ENCODE measurements at regions of chr5 and their contacts with region 1.

Region 1: DNA sequence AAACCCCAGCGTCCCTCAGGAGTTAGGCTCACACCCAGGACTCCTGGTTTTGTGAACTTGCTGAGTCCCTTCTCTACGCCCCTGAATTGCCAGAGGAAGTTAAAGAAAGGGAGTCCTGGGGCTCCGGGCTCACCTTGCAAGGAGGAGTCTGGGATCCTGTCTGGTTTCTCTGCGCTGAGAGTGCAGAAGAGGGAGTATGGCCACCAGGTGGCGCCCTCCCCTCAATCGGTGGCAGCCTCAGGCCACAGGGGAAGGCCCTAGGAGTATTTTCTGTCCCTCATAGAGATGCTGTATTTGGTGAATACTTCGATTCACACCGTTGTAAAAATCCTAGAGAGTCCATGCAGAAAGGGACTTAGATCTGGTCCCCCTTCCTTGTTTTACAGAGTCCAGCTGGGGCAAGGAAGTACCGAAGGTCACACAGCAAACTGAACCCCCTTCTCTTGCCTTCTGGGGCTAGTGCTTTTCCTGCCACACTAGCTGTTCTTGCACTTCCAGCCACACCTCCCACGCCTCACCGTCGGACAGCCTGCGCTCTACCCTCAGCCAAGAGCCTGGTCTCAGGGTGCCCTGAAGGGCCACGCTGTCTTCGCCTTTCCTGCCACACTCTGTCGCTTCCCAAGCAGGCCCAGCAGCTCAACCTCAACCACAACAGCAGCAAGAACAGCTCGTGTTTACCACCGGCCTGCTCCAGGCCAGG is 10.2 kb downstream of the HAND1 start:
- DNase-seq: peak; percentile 89
- H3K4me3 ChIP-seq: no peak overlapping the region
- H3K27ac ChIP-seq: peak overlapping the region in 3 of 4 donors; percentile 61 to 65 (median 62)
- H3K4me1 ChIP-seq: peaks cover 0 to 43% (median 27%) of the 10 kb centered on the region in 4 donors
- H3K27me3 ChIP-seq: no peaks in the 10 kb centered on the region
- CTCF ChIP-seq: peak; percentile 75 to 95 (median 79)
- EP300 ChIP-seq: no peak
- POLR2A ChIP-seq: no peak

Region 2: DNA sequence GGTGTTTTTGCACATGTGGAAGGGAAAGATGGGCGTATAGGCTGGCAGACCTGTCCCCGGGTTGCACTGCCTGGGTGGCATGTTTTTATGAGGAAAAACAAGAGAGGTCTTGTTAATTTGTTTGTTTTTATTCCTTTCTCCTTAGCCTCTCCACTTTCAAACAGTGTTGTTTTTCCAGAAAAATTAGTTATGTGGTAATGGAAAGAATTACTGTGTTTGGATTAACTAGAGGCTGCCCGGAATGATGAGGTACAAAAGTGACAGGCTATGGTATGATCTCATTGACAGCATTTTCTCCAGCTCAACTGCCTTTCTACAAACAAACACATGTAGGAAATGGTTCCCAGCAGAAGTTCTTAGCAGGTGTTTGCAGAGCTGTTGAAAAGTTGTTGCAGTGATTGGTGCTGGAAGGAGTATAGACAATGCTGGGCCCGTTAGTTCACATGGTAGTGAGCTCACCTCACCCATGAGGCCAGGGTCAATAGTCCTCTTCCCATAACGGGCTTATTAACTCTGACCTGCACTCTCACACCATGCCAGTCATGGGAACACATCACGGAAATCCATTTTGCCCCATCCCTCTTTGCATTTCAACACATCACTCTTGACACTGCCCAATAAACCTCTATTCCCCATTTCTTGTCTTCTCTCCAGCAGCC is 133.3 kb before region 1 on chr5:
- intact Hi-C with region 1: no loop called
- DNase-seq: no peak
- H3K4me3 ChIP-seq: no peak overlapping the region
- H3K27ac ChIP-seq: no peak overlapping the region
- H3K4me1 ChIP-seq: peaks cover 0 to 4% (median 0%) of the 10 kb centered on the region in 4 donors
- H3K27me3 ChIP-seq: no peaks in the 10 kb centered on the region
- CTCF ChIP-seq: no peak
- EP300 ChIP-seq: no peak
- POLR2A ChIP-seq: no peak

Region 3: GRCh38 chr5:154483654-154484392 is 16.0 kb after region 1 on chr5:
- intact Hi-C with region 1: loop called (anchors 2 kb)
- DNase-seq: no peak
- H3K4me3 ChIP-seq: peak overlapping the region in 3 of 4 donors; percentile 5 to 33 (median 31)
- H3K27ac ChIP-seq: peak overlapping the region in 3 of 4 donors; percentile 91 to 96 (median 94)
- H3K4me1 ChIP-seq: peaks cover 0 to 83% (median 77%) of the 10 kb centered on the region in 4 donors
- H3K27me3 ChIP-seq: peaks cover 0 to 51% (median 4%) of the 10 kb centered on the region in 3 donors
- CTCF ChIP-seq: no peak
- EP300 ChIP-seq: no peak
- POLR2A ChIP-seq: no peak

Region 4: DNA sequence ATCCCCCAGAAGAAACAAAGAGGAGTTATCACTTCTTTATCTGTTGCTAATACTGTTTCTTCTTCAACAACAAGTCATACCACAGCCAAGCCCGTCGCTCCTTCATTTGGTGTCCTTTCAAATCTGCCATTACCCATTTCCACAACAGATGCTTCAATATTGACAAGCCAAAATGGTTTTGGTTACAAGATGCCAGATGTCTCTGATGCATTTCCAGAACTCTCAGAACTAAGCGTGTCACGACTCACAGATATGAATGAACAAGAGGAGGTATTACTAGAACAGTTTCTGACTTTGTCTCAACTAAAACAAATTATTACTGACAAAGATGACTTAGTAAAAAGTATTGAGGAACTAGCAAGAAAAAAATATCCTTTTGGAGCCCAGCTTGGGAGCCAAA is 26.2 kb after region 1 on chr5:
- intact Hi-C with region 1: no loop called
- DNase-seq: no peak
- H3K4me3 ChIP-seq: no peak overlapping the region
- H3K27ac ChIP-seq: no peak overlapping the region
- H3K4me1 ChIP-seq: no peaks in the 10 kb centered on the region
- H3K27me3 ChIP-seq: no peaks in the 10 kb centered on the region
- CTCF ChIP-seq: no peak
- EP300 ChIP-seq: no peak
- POLR2A ChIP-seq: no peak

Region 5: GRCh38 chr5:154520861-154521453 is 53.2 kb after region 1 on chr5:
- intact Hi-C with region 1: loop called (anchors 2 kb)
- DNase-seq: no peak
- H3K4me3 ChIP-seq: no peak overlapping the region
- H3K27ac ChIP-seq: no peak overlapping the region
- H3K4me1 ChIP-seq: peaks cover 0 to 55% (median 33%) of the 10 kb centered on the region in 4 donors
- H3K27me3 ChIP-seq: no peaks in the 10 kb centered on the region
- CTCF ChIP-seq: peak; percentile 30 to 79 (median 62)
- EP300 ChIP-seq: no peak
- POLR2A ChIP-seq: no peak

Region 6: DNA sequence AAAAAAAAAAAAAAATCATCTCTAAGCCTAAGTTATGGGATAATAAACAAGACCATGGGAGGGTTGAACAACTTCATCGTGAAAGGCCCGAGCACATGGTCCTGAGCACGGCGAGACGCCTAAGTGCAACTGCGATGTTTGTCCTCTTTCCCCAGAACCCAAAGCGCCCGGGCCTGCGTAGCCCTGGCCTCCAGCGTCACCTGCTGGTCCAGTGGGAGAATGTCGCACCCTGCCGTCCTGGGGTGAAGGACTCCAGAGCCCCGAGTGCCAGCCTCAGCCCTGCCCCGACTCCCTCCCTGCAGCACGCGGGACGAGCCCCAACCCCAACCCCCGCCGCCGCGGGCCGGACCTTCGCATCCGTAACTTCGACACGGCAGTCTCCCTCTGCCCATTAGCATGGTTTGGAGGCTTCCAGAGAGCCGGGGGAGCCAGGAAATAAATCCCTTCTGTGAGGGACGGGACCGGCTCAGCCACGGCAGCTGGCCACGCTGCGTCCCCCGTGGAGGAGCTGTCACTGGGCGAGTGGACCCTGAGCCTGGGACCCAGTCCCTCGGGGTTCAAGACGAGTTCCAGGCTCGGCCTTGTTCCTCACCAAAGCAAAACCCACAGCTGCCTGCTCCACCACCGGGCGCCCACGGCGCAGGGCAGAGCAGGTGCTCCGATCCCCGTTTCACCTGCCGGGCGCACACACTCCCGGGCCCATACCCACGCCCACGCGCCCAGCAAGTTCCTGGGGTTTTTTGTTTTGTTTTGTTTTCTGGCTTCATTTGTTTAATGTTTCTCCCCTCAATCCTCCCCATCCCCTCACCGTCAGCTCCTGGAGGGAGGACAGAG is 142.7 kb after region 1 on chr5:
- intact Hi-C with region 1: loop called (anchors 1 kb)
- DNase-seq: peak; percentile 91
- H3K4me3 ChIP-seq: peak overlapping the region; percentile 15 to 49 (median 43)
- H3K27ac ChIP-seq: no peak overlapping the region
- H3K4me1 ChIP-seq: peaks cover 0 to 39% (median 29%) of the 10 kb centered on the region in 4 donors
- H3K27me3 ChIP-seq: peaks cover 0 to 21% (median 0%) of the 10 kb centered on the region in 3 donors
- CTCF ChIP-seq: peak; percentile 88 to 93 (median 93)
- EP300 ChIP-seq: no peak
- POLR2A ChIP-seq: no peak

Region 7: GRCh38 chr5:155140651-155141050 is 672.8 kb after region 1 on chr5:
- intact Hi-C with region 1: no loop called
- DNase-seq: no peak
- H3K4me3 ChIP-seq: no peak overlapping the region
- H3K27ac ChIP-seq: no peak overlapping the region
- H3K4me1 ChIP-seq: peaks cover 0 to 5% (median 0%) of the 10 kb centered on the region in 4 donors
- H3K27me3 ChIP-seq: no peaks in the 10 kb centered on the region
- CTCF ChIP-seq: no peak
- EP300 ChIP-seq: no peak
- POLR2A ChIP-seq: no peak